ENCODE measurements at regions of chr20 and their contacts with region 1.

Region 1: GRCh38 chr20:39381596-39381995 is 419.5 kb downstream of the DHX35 start:
- DNase-seq: no peak
- ATAC-seq: no peak
- H3K4me3 ChIP-seq: no peak overlapping the region
- H3K27ac ChIP-seq: no peak overlapping the region
- H3K4me1 ChIP-seq: no peaks in the 10 kb centered on the region
- H3K27me3 ChIP-seq: no peaks in the 10 kb centered on the region
- CTCF ChIP-seq: no peak
- POLR2A ChIP-seq: no peak
- RAD21 ChIP-seq: no peak

Region 2: DNA sequence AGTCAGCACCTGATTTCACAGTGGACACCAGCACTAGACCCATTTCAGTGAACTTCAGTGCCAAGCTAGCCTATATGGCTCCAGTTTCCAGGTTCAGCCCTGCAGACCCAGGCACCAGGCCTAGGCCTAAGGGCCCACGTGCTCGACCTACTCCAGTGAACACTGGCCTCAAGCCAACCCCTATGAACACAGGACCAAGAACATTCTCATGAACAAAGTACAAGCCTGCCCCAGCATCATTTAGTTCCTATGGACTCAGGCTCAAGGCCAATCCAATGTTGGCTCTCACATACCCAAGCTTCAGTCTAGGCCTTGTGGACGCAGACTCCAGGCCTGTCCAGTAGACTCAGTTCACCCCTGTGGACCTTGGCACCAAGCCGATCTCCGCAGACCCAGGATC is 34.0 kb before region 1 on chr20:
- CTCF ChIA-PET with region 1: no interaction called
- POLR2A ChIA-PET with region 1: no interaction called
- dilution Hi-C with region 1: no loop called
- in situ Hi-C with region 1: no loop called
- intact Hi-C with region 1: loop called (anchors 1 kb)
- DNase-seq: no peak
- ATAC-seq: no peak
- H3K4me3 ChIP-seq: no peak overlapping the region
- H3K27ac ChIP-seq: no peak overlapping the region
- H3K4me1 ChIP-seq: no peaks in the 10 kb centered on the region
- H3K27me3 ChIP-seq: no peaks in the 10 kb centered on the region
- CTCF ChIP-seq: no peak
- POLR2A ChIP-seq: no peak
- RAD21 ChIP-seq: no peak

Measured in IMR-90 (cell line).